ENCODE measurements at regions of chr9 and their contacts with region 1.

Region 1: DNA sequence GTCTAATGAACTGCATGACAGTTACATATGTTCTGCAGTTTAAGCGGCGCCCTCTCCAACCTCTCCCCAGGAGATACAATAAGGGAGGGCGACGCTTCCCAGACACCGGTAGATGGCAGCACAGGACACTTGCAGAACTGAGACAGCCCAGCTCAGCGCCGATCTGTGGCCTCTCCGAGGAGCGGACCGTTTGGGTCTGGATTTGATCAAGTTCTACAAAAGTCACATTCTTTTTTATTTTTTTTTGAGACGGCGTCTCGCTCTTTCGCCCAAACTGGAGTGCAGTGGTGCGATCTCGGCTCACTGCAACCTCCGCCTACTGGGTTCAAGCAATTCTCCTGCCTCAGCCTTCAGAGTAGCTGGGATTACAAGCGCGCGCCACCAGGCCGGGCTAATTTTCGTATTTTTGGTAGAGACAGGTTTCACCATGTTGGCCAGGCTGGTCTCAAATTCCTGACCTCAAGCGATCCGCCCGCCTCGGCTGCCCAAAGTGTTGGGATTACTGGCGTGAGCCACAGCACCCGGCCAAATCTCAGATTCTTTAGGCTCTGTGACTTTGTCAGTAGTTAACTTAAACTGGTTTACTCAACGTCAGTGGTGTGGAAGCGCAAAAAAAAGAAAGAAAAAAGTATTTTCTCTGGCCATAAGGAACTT is 1.4 kb upstream of the ATOSB start:
- DNase-seq: peak; percentile 83 to 96
- H3K4me3 ChIP-seq: peak overlapping the region; percentile 46 to 62
- H3K27ac ChIP-seq: peak overlapping the region; percentile 98 to 99
- H3K4me1 ChIP-seq: peaks cover 15 to 35% of the 10 kb centered on the region in 2 donors
- H3K27me3 ChIP-seq: no peaks in the 10 kb centered on the region
- CTCF ChIP-seq: peak; percentile 88 to 97 (median 97)

Region 2: GRCh38 chr9:34929506-34930102 is 187.4 kb before region 1 on chr9:
- intact Hi-C with region 1: no loop called
- DNase-seq: no peak
- H3K4me3 ChIP-seq: no peak overlapping the region
- H3K27ac ChIP-seq: no peak overlapping the region
- H3K4me1 ChIP-seq: no peaks in the 10 kb centered on the region
- H3K27me3 ChIP-seq: no peaks in the 10 kb centered on the region
- CTCF ChIP-seq: peak in 2 of 3 experiments; percentile 26 to 34

Region 3: GRCh38 chr9:35056571-35057270 is 60.3 kb before region 1 on chr9:
- intact Hi-C with region 1: no loop called
- DNase-seq: no peak
- H3K4me3 ChIP-seq: no peak overlapping the region
- H3K27ac ChIP-seq: no peak overlapping the region
- H3K4me1 ChIP-seq: no peaks in the 10 kb centered on the region
- H3K27me3 ChIP-seq: no peaks in the 10 kb centered on the region
- CTCF ChIP-seq: no peak

Region 4: GRCh38 chr9:35152936-35153335 is 35.9 kb after region 1 on chr9:
- intact Hi-C with region 1: no loop called
- DNase-seq: no peak
- H3K4me3 ChIP-seq: no peak overlapping the region
- H3K27ac ChIP-seq: no peak overlapping the region
- H3K4me1 ChIP-seq: no peaks in the 10 kb centered on the region
- H3K27me3 ChIP-seq: no peaks in the 10 kb centered on the region
- CTCF ChIP-seq: no peak

Region 5: GRCh38 chr9:35258676-35259474 is 141.8 kb after region 1 on chr9:
- intact Hi-C with region 1: loop called (anchors 1 kb)
- DNase-seq: peak in 1 of 2 donors; percentile 78
- H3K4me3 ChIP-seq: no peak overlapping the region
- H3K27ac ChIP-seq: no peak overlapping the region
- H3K4me1 ChIP-seq: no peaks in the 10 kb centered on the region
- H3K27me3 ChIP-seq: no peaks in the 10 kb centered on the region
- CTCF ChIP-seq: peak; percentile 62 to 71 (median 65)

Region 6: DNA sequence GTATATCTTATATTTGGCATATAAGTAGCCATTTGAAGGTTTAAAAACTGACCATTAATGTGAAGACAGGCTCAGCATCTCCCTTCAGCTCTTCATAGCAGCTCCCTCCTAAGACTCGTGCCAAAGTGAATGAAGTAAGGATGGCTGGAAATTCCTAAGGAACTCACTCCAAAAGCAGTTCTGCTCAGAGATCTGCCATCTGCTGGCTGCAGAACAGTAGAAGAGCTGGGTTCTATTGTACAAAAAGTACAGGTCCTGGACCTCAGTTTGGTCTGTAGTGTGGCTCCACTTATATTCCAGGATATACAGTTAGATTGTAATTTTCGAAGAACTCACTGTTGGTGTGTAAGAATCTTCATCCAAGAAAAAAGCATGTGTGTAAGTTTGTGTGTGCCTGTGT is 268.0 kb after region 1 on chr9:
- intact Hi-C with region 1: loop called (anchors 1 kb)
- DNase-seq: no peak
- H3K4me3 ChIP-seq: no peak overlapping the region
- H3K27ac ChIP-seq: no peak overlapping the region
- H3K4me1 ChIP-seq: no peaks in the 10 kb centered on the region
- H3K27me3 ChIP-seq: no peaks in the 10 kb centered on the region
- CTCF ChIP-seq: peak; percentile 25 to 50 (median 29)

Region 7: GRCh38 chr9:35563791-35564197 is 446.8 kb after region 1 on chr9:
- intact Hi-C with region 1: loop called (anchors 5 kb)
- DNase-seq: peak in 1 of 2 donors; percentile 85
- H3K4me3 ChIP-seq: peak overlapping the region; percentile 17 to 19
- H3K27ac ChIP-seq: peak overlapping the region; percentile 83 to 94
- H3K4me1 ChIP-seq: peaks cover 23 to 52% of the 10 kb centered on the region in 2 donors
- H3K27me3 ChIP-seq: no peaks in the 10 kb centered on the region
- CTCF ChIP-seq: no peak

Region 8: GRCh38 chr9:35732122-35732799 is 615.2 kb after region 1 on chr9 and contains the starts of genes CREB3 and TLN1:
- intact Hi-C with region 1: loop called (anchors 10 kb)
- DNase-seq: peak; percentile 98 to 100
- H3K4me3 ChIP-seq: peak within 1 kb of the TSS; percentile 74 to 81
- H3K27ac ChIP-seq: peak within 1 kb of the TSS; percentile 98 to 99
- H3K4me1 ChIP-seq: peaks cover 18 to 28% of the 10 kb centered on the region in 2 donors
- H3K27me3 ChIP-seq: no peaks in the 10 kb centered on the region
- CTCF ChIP-seq: no peak
- total RNA-seq, gene CREB3: 48.3 TPM
- total RNA-seq, gene TLN1: 735 TPM

Measured in ascending aorta (tissue), 2 donors.